Posterior vena cava (tissue), 2 donors: ENCODE measurements at regions of chr1 and their contacts with region 1.

Region 1: DNA sequence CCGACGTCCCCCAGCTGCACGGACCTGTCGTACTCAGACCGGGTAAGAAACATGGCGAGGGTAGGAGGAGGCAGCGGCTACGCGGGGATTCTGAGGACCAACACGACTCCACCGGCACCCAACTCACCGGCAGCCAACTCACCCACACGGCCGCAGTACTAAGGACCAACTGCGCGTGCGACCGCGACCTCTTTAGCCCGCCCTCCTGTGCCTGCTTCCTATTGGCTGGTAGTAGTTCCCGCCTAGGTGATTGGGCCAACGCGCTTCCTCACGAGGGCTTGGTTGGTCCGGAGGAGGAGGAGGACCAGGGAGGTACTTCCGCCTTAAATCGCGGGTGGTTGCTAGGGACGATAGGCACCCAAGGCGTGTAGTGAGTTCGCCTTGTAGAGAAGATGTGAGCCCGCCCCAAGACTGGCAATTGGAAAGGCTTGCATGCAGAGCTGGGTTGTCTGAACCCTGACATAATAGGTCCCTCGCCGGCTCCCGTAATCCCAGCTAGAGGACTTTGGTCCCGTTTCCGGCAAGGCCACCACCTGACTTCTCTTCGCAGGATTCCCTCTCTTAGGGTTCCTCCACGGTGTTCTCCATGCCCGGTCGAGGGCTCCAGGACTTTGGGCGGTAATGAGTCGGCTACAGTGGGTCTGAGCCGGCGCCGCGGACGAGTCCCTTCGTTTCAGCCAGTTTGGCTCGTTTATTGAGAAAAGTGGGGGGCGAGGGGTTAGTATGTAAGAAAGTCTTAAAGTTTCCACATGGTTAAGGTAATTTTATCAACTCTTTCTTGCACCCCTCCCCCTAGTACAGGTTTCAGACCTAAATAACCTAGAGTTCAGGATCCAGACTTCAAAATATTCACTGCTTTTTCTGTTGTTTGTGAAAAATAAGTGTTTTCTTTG is at the start of gene PSMA5:
- DNase-seq: peak; percentile 99
- total RNA-seq, gene PSMA5: 43.3 to 51.2 TPM

Region 2: GRCh38 chr1:109112652-109113285 is 313.8 kb before region 1 on chr1:
- intact Hi-C with region 1: no loop called
- DNase-seq: peak; percentile 98

Region 3: DNA sequence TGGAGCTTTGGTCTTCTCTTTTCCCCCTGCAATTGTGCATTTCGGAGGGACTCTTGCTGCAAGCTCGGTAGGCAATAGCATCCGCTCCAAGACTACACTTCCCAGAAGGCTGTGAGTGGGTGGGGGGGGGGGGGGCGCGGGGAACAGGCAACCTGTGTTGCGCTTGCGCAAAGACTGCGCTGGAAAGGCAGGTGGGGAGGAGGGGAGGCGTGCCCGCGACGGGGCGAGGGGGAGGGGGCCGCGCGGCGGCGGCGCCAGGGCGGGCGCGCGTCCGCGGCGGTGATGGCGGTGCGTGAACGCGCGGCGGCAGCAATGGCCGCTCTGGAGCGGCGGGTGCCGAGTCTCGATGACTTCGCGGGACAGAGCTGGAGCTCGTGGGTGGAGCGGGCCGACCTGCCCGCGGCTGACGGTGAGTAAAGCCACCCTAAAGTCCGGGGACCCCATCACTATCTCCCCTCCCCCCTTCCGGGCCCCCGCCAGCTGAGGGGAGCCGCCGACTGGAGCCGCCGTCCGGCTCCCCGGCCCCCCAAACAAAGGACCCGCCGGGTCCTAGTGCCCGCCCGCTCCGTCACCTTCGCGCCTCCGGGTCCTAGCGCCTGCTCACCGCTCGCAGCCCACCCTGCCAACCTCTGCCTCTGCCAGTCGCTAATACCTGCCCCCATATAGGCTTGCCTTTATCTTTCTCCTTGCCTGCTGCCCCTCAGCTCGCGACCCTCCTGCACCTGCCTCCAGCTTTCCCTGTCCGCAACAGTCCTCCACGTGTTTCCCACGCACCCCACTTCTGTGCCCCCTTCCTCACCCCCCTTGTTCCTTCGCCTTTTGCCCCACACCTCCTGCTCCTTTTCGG is 57.4 kb after region 1 on chr1 and contains the start of gene ATXN7L2:
- intact Hi-C with region 1: loop called in 1 of 2 experiments (anchors 5 kb)
- DNase-seq: peak; percentile 98
- total RNA-seq, gene ATXN7L2: 2.7 to 3.3 TPM